MCF 10A (cell line): ENCODE measurements at regions of chr10 and their contacts with region 1.

Region 1: GRCh38 chr10:125060826-125061556 is 99.4 kb downstream of the CTBP2 start:
- DNase-seq: peak; percentile 75
- H3K4me3 Mint-ChIP-seq: peak overlapping the region; percentile 19
- H3K27ac Mint-ChIP-seq: peak overlapping the region; percentile 73
- H3K4me1 Mint-ChIP-seq: peaks cover 46% of the 10 kb centered on the region
- H3K27me3 Mint-ChIP-seq: no peaks in the 10 kb centered on the region
- CTCF ChIP-seq: peak; percentile 72

Region 2: GRCh38 chr10:125038637-125039036 is 22.4 kb before region 1 on chr10:
- CTCF ChIA-PET with region 1: interaction called, 10 read pairs
- POLR2A ChIA-PET with region 1: interaction called, 3 read pairs
- intact Hi-C with region 1: no loop called
- DNase-seq: peak; percentile 71
- H3K4me3 Mint-ChIP-seq: no peak overlapping the region
- H3K27ac Mint-ChIP-seq: peak overlapping the region; percentile 91
- H3K4me1 Mint-ChIP-seq: peaks cover 41% of the 10 kb centered on the region
- H3K27me3 Mint-ChIP-seq: no peaks in the 10 kb centered on the region
- CTCF ChIP-seq: peak; percentile 12

Region 3: DNA sequence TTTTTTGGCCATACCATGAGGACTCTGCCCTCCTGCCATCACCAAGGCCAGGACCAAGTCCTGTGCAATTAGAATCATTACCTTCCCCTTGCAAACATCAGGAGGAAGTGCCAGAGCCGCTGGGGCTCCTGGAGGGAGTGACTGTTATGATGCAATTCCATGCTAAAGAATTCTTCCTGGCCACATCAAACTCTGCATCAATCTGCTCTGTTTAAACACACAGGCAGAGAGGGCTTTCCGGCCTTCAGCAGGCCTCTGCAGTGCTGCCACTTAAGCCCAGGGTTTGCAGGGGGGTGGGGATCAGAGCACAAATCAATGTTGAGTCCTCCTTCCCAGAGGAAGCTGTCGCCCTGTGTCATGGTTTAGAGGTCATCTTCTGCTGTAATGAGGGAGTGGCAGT is 41.2 kb after region 1 on chr10:
- CTCF ChIA-PET with region 1: interaction called, 12 read pairs
- POLR2A ChIA-PET with region 1: interaction called, 3 read pairs
- intact Hi-C with region 1: no loop called
- DNase-seq: peak; percentile 62
- H3K4me3 Mint-ChIP-seq: no peak overlapping the region
- H3K27ac Mint-ChIP-seq: no peak overlapping the region
- H3K4me1 Mint-ChIP-seq: peaks cover 29% of the 10 kb centered on the region
- H3K27me3 Mint-ChIP-seq: no peaks in the 10 kb centered on the region
- CTCF ChIP-seq: no peak

Region 4: DNA sequence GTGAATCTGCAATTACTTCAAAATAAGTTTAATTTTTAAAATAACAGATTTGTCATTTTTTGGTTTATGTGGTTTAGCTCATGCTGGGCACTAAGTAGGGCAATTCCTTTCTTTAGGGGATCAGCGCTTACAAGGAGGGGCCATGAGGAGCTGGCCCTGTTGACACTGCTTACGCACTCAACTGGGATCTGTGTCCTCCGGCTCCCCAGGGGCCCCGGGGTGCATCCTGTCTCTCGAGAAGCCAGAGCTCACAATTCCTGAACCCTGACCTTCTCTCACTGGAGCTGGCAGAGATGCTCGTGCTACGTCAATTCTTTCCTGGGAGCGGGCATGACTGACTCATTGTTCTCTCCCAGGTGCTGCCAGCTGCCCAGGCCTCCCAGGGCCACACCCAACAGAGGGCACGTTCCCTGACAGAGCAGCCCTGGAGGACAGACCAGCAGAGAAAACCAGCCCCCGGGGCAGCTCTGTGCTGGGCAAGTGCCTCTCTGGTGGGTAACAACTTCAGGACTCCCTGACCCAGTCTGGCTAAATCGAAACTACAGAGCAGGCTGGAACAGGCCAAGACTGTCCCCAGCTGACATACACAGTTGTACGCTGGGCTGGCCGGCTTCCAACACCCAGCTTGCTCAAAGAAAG is 62.6 kb after region 1 on chr10:
- CTCF ChIA-PET with region 1: interaction called, 8 read pairs
- POLR2A ChIA-PET with region 1: interaction called, 24 read pairs
- intact Hi-C with region 1: no loop called
- DNase-seq: peak; percentile 99
- H3K4me3 Mint-ChIP-seq: peak overlapping the region; percentile 65
- H3K27ac Mint-ChIP-seq: peak overlapping the region; percentile 93
- H3K4me1 Mint-ChIP-seq: peaks cover 76% of the 10 kb centered on the region
- H3K27me3 Mint-ChIP-seq: no peaks in the 10 kb centered on the region
- CTCF ChIP-seq: no peak